ENCODE measurements at regions of chr1 and their contacts with region 1.

Region 1: GRCh38 chr1:28642847-28643635 is at the start of gene TAF12:
- DNase-seq: peak; percentile 84 to 91
- ATAC-seq: peak; percentile 83 to 90
- H3K4me3 ChIP-seq: peak within 1 kb of the TSS; percentile 71 to 95 (median 81)
- H3K27ac ChIP-seq: peak within 1 kb of the TSS; percentile 85 to 96 (median 92)
- H3K4me1 ChIP-seq: peaks cover 26 to 50% of the 10 kb centered on the region in 2 donors
- H3K27me3 ChIP-seq: no peaks in the 10 kb centered on the region
- CTCF ChIP-seq: peak; percentile 10 to 55 (median 50)
- POLR2A ChIP-seq: peak; percentile 92 to 94
- total RNA-seq, gene TAF12: 33.5 to 81.6 (median 65.0) TPM

Region 2: GRCh38 chr1:28505406-28506187 is 137.4 kb before region 1 on chr1 and contains the start of gene RCC1:
- in situ Hi-C with region 1: no loop called
- intact Hi-C with region 1: loop called (anchors 2 kb)
- DNase-seq: peak; percentile 96 to 98
- ATAC-seq: peak; percentile 96 to 97
- H3K4me3 ChIP-seq: peak within 1 kb of the TSS; percentile 67 to 83 (median 75)
- H3K27ac ChIP-seq: peak within 1 kb of the TSS; percentile 78 to 93 (median 86)
- H3K4me1 ChIP-seq: peaks cover 41 to 48% of the 10 kb centered on the region in 2 donors
- H3K27me3 ChIP-seq: no peaks in the 10 kb centered on the region
- CTCF ChIP-seq: no peak
- POLR2A ChIP-seq: peak; percentile 90 to 94
- total RNA-seq, gene RCC1: 6.1 to 24.5 (median 13.7) TPM

Region 3: GRCh38 chr1:28581536-28582247 is 61.3 kb before region 1 on chr1:
- in situ Hi-C with region 1: no loop called
- intact Hi-C with region 1: loop called (anchors 2 kb)
- DNase-seq: peak; percentile 95
- ATAC-seq: peak; percentile 92 to 96
- H3K4me3 ChIP-seq: peak overlapping the region; percentile 76 to 95 (median 88)
- H3K27ac ChIP-seq: peak overlapping the region; percentile 89 to 94 (median 91)
- H3K4me1 ChIP-seq: peaks cover 23 to 25% of the 10 kb centered on the region in 2 donors
- H3K27me3 ChIP-seq: no peaks in the 10 kb centered on the region
- CTCF ChIP-seq: peak in 4 of 5 experiments; percentile 22 to 42 (median 30)
- POLR2A ChIP-seq: peak; percentile 96 to 99

Region 4: GRCh38 chr1:28736450-28737306 is 93.6 kb after region 1 on chr1 and contains the start of gene YTHDF2:
- in situ Hi-C with region 1: loop called in 2 of 4 experiments (anchors 5 to 10 kb)
- intact Hi-C with region 1: loop called (anchors 1 kb)
- DNase-seq: peak; percentile 92 to 96
- ATAC-seq: peak; percentile 91 to 95
- H3K4me3 ChIP-seq: peak within 1 kb of the TSS; percentile 82 to 94 (median 90)
- H3K27ac ChIP-seq: peak within 1 kb of the TSS; percentile 90 to 97 (median 96)
- H3K4me1 ChIP-seq: peaks cover 35 to 42% of the 10 kb centered on the region in 2 donors
- H3K27me3 ChIP-seq: no peaks in the 10 kb centered on the region
- CTCF ChIP-seq: peak; percentile 95 to 97 (median 96)
- POLR2A ChIP-seq: peak; percentile 94 to 95
- total RNA-seq, gene YTHDF2: 35.6 to 50.6 (median 47.0) TPM

Region 5: DNA sequence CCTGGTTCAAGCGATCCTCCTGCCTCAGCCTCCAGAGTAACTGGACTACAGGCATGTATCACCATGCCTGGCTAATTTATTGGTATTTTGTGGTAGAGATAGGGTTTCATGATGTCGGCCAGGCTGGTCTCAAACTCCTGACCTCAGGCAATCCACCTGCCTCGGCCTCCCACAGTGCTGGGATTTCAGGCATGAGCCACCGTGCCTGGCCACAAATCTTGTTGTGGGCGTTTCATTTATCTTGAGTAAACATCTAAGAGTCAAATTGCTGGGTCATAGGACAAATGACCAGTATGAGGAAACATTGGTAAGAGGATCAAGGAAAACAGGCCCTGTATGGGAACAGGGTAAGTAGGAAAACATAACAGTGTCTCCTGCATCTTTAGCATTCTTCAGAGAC is 462.8 kb after region 1 on chr1:
- in situ Hi-C with region 1: no loop called
- intact Hi-C with region 1: no loop called
- DNase-seq: no peak
- ATAC-seq: no peak
- H3K4me3 ChIP-seq: no peak overlapping the region
- H3K27ac ChIP-seq: no peak overlapping the region
- H3K4me1 ChIP-seq: no peaks in the 10 kb centered on the region
- H3K27me3 ChIP-seq: no peaks in the 10 kb centered on the region
- CTCF ChIP-seq: no peak
- POLR2A ChIP-seq: no peak

Region 6: DNA sequence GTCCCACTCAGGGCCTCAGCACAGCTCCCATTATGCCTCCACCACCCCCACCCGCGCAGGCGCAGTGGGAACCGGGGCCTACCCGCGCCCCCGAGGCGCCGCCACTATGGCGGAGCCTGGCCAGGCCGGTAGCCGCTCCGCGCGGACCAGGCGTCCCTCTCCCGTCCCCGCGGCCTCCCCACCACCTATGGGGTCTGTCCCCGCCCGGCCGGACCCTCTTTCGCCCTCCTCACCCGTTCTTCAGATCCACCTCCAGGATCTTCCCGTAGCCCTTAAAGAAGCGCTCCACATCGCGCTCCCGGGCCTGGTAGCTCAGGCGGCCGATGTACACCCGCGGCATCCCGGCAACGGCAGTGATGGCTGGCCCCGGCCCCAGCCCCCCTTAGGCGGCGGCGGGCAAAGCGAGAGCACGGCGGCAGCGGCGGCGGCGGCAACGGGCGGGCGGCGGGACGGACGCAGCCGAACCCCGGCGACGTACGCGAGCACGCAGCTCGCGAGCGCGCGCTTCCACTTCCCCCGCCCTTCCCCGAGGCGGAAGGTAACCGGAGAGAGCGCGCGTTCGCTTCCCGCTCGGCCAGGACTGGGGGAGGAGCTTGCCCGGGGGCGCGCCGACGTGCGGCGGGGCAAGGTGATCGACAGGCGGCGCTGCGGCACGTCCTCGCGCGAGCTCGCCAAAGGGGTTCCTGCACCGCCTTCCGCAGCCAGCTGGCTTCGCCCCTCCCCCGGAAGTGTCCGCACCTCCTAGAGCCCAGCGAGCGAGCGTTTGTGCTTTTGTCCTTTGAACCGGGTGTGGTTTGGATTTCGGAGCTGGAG is 538.6 kb after region 1 on chr1 and contains the start of gene SRSF4:
- in situ Hi-C with region 1: no loop called
- intact Hi-C with region 1: loop called (anchors 2 kb)
- DNase-seq: peak; percentile 99
- ATAC-seq: peak; percentile 90 to 92
- H3K4me3 ChIP-seq: peak within 1 kb of the TSS; percentile 78 to 98 (median 82)
- H3K27ac ChIP-seq: peak within 1 kb of the TSS; percentile 94 to 100 (median 97)
- H3K4me1 ChIP-seq: peaks cover 40 to 48% of the 10 kb centered on the region in 2 donors
- H3K27me3 ChIP-seq: no peaks in the 10 kb centered on the region
- CTCF ChIP-seq: peak; percentile 57 to 81 (median 74)
- POLR2A ChIP-seq: peak; percentile 95 to 98
- total RNA-seq, gene SRSF4: 42.4 to 72.5 (median 65.4) TPM